ENCODE measurements at regions of chr3 and their contacts with region 1.

Region 1: GRCh38 chr3:150787741-150788370 is 24.9 kb upstream of the SIAH2 start:
- DNase-seq: peak in 1 of 2 experiments; percentile 55
- H3K4me3 ChIP-seq: no peak overlapping the region
- H3K27ac ChIP-seq: no peak overlapping the region
- H3K4me1 ChIP-seq: peaks cover 18% of the 10 kb centered on the region
- H3K27me3 ChIP-seq: no peaks in the 10 kb centered on the region
- CTCF ChIP-seq: peak; percentile 51

Region 2: DNA sequence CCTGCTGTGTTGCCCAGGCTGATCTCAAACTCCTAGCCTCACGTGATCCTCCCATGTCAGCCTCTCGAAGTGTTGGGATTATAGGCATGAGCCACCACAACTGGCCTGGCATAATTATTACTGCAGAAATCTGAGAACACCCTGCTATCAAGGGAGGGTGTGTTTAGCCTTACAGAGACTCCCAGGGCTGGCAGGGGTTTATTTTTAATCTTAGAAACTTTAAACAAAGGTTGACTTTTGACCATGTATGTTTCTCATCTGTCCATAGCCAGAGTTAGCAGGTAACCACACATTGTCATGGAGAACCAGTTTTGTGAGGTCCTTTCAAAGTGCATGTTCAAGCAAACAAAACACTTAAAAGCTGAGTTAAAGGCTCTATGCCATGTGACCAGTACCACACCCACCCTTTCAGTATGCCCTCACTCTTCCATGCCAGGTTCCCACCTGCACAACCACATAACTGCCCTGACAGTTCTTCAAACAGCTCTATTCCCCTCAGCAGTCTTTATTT is 36.0 kb before region 1 on chr3:
- CTCF ChIA-PET with region 1: no interaction called
- POLR2A ChIA-PET with region 1: no interaction called
- intact Hi-C with region 1: loop called (anchors 1 kb)
- DNase-seq: peak; percentile 61 to 93
- H3K4me3 ChIP-seq: no peak overlapping the region
- H3K27ac ChIP-seq: peak overlapping the region; percentile 60
- H3K4me1 ChIP-seq: peaks cover 22% of the 10 kb centered on the region
- H3K27me3 ChIP-seq: no peaks in the 10 kb centered on the region
- CTCF ChIP-seq: no peak

Region 3: GRCh38 chr3:152662157-152662556 is 1874.3 kb after region 1 on chr3:
- CTCF ChIA-PET with region 1: no interaction called
- POLR2A ChIA-PET with region 1: no interaction called
- intact Hi-C with region 1: no loop called
- DNase-seq: no peak
- H3K4me3 ChIP-seq: no peak overlapping the region
- H3K27ac ChIP-seq: no peak overlapping the region
- H3K4me1 ChIP-seq: no peaks in the 10 kb centered on the region
- H3K27me3 ChIP-seq: no peaks in the 10 kb centered on the region
- CTCF ChIP-seq: no peak; the same call in 1 of the 2 replicates